ENCODE measurements at regions of chr17 and their contacts with region 1.

Region 1: GRCh38 chr17:67862614-67863217 is 37.4 kb downstream of the BPTF start:
- DNase-seq: no peak
- H3K4me3 ChIP-seq: no peak overlapping the region
- CTCF ChIP-seq: no peak

Region 2: GRCh38 chr17:67733371-67733940 is 129.3 kb before region 1 on chr17:
- in situ Hi-C with region 1: loop called (anchors 10 kb)
- DNase-seq: no peak
- H3K4me3 ChIP-seq: no peak overlapping the region
- CTCF ChIP-seq: no peak

Region 3: DNA sequence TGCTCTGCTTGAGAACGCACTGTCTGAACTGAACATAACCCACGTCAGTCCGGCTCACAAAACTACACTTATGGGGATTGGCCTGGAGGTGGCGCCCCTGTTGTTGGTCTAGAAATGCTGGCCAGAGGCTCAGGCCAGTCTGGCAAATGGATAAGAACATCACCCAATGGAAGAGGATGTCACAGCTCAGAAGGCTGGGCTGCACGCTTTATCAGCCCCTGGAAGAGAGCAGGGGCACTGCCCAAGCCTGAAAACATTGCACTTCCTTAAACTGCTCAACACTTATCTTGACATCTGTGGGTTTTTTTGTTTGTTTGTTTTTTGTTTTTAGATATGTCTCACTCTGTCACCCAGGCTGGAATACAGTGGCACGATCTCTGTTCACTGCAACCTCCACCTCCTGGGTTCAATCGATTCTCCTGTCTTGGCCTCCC is 62.2 kb before region 1 on chr17:
- in situ Hi-C with region 1: loop called (anchors 5 kb)
- DNase-seq: peak; percentile 53
- H3K4me3 ChIP-seq: no peak overlapping the region
- CTCF ChIP-seq: peak; percentile 71

Region 4: DNA sequence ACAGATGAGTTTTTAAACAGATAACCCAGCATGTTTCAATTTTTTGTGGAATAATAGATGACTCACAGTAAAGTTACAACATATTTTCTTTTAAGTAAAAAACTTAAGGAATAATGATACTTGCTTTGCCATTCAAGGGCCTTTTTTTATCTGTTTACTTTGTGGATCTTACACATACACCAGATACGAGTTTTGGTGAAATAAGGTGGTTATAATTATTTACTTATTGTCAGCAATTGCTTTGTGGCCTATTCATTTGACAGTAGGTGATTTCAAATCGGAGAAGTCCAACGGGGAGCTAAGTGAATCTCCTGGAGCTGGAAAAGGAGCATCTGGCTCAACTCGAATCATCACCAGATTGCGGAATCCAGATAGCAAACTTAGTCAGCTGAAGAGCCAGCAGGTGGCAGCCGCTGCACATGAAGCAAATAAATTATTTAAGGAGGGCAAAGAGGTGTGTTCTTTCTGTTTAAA is 28.9 kb after region 1 on chr17:
- in situ Hi-C with region 1: no loop called
- DNase-seq: peak; percentile 12
- H3K4me3 ChIP-seq: no peak overlapping the region
- CTCF ChIP-seq: peak; percentile 45

Region 5: DNA sequence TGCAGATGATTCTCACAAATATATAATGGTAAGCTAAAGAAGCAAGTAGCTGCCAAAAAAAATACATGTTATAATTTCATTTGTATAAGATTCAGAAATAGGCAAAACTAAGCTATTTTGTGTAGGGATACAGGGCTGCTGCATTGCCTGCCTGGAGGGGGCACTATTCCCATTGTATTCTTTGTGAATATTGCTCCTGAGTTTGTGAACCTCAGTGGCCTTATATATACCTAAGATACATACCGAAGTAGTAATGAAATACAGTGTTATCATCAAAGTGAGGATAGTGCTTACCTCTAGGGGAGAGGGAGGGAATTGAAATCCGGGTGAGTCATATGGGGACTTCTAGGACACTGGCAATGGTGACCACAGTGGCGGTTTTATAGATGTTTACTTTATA is 80.1 kb after region 1 on chr17:
- in situ Hi-C with region 1: no loop called
- DNase-seq: no peak
- H3K4me3 ChIP-seq: no peak overlapping the region
- CTCF ChIP-seq: peak; percentile 38